SK-N-SH (cell line): ENCODE measurements at regions of chr1 and their contacts with region 1.

Region 1: GRCh38 chr1:228004331-228004855 is 2.4 kb upstream of the WNT3A start:
- DNase-seq: peak; percentile 67
- H3K4me3 ChIP-seq: no peak overlapping the region; a peak in 1 of 4 replicates
- H3K27ac ChIP-seq: no peak overlapping the region
- H3K4me1 ChIP-seq: no peaks in the 10 kb centered on the region; a peak in 1 of 4 replicates
- H3K27me3 ChIP-seq: peaks cover 44% of the 10 kb centered on the region
- CTCF ChIP-seq: peak; percentile 40
- EP300 ChIP-seq: no peak
- RAD21 ChIP-seq: peak; percentile 33; the same call in 1 of the 2 replicates

Region 2: DNA sequence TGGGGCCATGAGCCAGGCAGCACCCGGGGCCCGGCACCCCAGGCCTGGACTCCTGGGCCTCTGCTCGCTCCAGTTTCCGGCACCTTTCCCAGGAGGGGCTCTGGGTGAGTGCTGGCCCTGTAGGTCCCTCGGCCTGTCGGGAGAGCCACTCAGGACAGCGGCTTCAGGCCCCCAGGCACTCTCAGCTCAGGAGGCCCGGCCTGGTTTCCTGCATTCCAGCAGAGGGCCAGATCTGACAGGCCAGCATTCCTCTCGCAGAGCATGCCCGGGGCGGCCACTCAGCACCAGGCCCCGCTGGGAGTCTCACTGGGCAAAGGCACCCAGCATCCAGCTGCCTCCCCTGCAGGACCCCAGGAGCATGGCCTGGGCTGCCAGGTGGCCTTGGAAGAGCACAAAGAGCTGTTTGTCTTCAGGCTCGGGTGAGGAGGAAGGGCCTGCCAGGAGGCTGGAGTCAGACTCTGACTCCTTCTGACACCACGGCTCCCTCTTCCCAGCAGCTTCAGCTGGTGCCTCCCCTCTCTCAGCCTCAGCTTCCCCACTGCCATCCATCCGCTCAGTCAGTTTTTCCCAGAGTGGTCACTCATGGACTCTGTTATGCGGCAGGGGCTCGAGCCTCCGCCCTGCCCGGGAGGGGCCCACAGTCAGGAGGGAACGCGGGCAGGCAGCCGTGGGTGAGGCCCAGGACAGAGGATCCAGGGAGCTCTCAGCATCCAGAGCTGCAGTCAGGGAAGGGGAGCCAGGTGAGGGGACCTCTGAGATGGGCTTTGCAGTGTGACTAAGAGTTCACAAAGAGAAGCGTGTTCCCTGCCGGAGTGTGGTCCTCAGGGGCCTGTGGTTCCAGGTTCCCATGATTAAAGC is 108.3 kb before region 1 on chr1:
- CTCF ChIA-PET with region 1: no interaction called
- POLR2A ChIA-PET with region 1: no interaction called
- DNase-seq: no peak
- H3K4me3 ChIP-seq: no peak overlapping the region
- H3K27ac ChIP-seq: no peak overlapping the region
- H3K4me1 ChIP-seq: no peaks in the 10 kb centered on the region
- H3K27me3 ChIP-seq: no peaks in the 10 kb centered on the region
- CTCF ChIP-seq: no peak
- EP300 ChIP-seq: no peak
- RAD21 ChIP-seq: no peak

Region 3: GRCh38 chr1:227913764-227914721 is 90.3 kb before region 1 on chr1:
- CTCF ChIA-PET with region 1: no interaction called
- POLR2A ChIA-PET with region 1: no interaction called
- DNase-seq: no peak
- H3K4me3 ChIP-seq: no peak overlapping the region
- H3K27ac ChIP-seq: no peak overlapping the region
- H3K4me1 ChIP-seq: no peaks in the 10 kb centered on the region
- H3K27me3 ChIP-seq: no peaks in the 10 kb centered on the region
- CTCF ChIP-seq: no peak
- EP300 ChIP-seq: no peak
- RAD21 ChIP-seq: no peak

Region 4: GRCh38 chr1:228015796-228016510 is 11.6 kb after region 1 on chr1:
- CTCF ChIA-PET with region 1: interaction called, 10 read pairs
- POLR2A ChIA-PET with region 1: no interaction called
- DNase-seq: no peak
- H3K4me3 ChIP-seq: no peak overlapping the region
- H3K27ac ChIP-seq: no peak overlapping the region
- H3K4me1 ChIP-seq: peaks cover 0 to 6% of the 10 kb centered on the region in 2 experiments; a peak in 1 of 4 replicates
- H3K27me3 ChIP-seq: no peaks in the 10 kb centered on the region
- CTCF ChIP-seq: no peak
- EP300 ChIP-seq: no peak
- RAD21 ChIP-seq: no peak

Region 5: DNA sequence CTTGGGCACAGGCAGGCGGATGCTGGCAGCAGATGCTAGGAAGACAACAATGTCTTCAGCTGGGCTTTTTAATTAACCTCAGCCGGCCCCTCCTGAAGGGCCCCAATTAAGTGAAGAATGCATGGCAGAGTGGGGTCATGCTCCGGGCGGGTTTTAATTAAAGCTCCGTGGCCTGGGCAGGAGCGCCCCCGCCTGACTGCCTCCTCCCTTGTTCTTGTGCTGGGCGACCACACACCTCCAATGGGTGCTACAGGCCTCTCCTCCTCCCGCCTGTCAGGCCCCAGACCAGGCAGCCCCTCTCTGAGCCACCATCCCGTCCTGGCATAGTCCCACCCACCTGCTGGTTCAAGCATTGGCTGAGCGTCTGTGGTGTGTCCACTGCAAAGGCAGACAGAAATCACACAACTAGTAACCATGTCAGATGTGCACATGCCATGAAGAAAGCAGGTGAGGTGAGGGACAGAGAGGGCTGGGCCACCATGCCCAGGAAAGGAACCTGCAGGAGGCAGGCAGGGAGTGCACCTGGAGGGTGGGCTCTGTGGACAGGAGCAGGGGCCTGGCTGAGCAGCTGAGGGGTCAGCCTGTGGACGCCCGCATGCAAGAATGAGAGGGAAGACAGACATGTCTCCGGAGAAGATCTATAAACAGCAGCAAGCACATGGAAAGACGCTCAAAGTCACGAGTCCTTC is 69.6 kb after region 1 on chr1:
- CTCF ChIA-PET with region 1: interaction called, 17 read pairs
- POLR2A ChIA-PET with region 1: no interaction called
- DNase-seq: peak; percentile 62
- H3K4me3 ChIP-seq: no peak overlapping the region
- H3K27ac ChIP-seq: no peak overlapping the region
- H3K4me1 ChIP-seq: peaks cover 0 to 20% of the 10 kb centered on the region in 2 experiments; a peak in 1 of 4 replicates
- H3K27me3 ChIP-seq: no peaks in the 10 kb centered on the region
- CTCF ChIP-seq: 0 out of 2 replicates have a peak, but pooled peaks have one; percentile 9
- EP300 ChIP-seq: no peak
- RAD21 ChIP-seq: peak; percentile 49